Right lobe of liver (tissue), 6 donors: ENCODE measurements at regions of chr20 and their contacts with region 1.

Region 1: GRCh38 chr20:31617432-31618104 is 12.5 kb downstream of the ID1 start:
- DNase-seq: no peak
- ATAC-seq: no peak
- H3K4me3 ChIP-seq: no peak overlapping the region
- H3K27ac ChIP-seq: no peak overlapping the region
- H3K4me1 ChIP-seq: peaks cover 0 to 3% (median 1%) of the 10 kb centered on the region in 4 donors
- H3K27me3 ChIP-seq: no peaks in the 10 kb centered on the region
- CTCF ChIP-seq: no peak
- POLR2A ChIP-seq: no peak

Region 2: DNA sequence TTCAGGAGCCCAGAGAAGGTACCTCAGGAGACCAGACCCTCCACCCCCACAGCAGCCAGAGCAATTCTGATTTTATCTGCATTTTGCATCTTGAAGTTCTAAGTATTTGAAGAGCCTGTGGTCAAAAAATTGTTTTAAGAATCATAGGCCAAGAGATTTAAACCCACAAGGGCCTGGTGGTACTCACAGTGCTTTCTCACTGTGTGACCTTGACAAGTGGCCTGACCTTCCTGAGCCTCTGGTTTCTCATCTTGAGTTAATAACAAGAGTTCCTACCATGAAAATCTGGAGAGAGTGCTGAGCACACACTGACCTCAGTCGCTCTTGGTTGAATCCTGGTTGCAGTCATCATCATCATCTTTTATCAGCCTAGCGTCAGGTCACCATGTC is 57.9 kb before region 1 on chr20:
- intact Hi-C with region 1: loop called in 1 of 2 experiments (anchors 5 kb)
- DNase-seq: no peak
- ATAC-seq: no peak
- H3K4me3 ChIP-seq: no peak overlapping the region
- H3K27ac ChIP-seq: no peak overlapping the region
- H3K4me1 ChIP-seq: peaks cover 0 to 10% (median 0%) of the 10 kb centered on the region in 4 donors
- H3K27me3 ChIP-seq: no peaks in the 10 kb centered on the region
- CTCF ChIP-seq: no peak
- POLR2A ChIP-seq: no peak

Region 3: DNA sequence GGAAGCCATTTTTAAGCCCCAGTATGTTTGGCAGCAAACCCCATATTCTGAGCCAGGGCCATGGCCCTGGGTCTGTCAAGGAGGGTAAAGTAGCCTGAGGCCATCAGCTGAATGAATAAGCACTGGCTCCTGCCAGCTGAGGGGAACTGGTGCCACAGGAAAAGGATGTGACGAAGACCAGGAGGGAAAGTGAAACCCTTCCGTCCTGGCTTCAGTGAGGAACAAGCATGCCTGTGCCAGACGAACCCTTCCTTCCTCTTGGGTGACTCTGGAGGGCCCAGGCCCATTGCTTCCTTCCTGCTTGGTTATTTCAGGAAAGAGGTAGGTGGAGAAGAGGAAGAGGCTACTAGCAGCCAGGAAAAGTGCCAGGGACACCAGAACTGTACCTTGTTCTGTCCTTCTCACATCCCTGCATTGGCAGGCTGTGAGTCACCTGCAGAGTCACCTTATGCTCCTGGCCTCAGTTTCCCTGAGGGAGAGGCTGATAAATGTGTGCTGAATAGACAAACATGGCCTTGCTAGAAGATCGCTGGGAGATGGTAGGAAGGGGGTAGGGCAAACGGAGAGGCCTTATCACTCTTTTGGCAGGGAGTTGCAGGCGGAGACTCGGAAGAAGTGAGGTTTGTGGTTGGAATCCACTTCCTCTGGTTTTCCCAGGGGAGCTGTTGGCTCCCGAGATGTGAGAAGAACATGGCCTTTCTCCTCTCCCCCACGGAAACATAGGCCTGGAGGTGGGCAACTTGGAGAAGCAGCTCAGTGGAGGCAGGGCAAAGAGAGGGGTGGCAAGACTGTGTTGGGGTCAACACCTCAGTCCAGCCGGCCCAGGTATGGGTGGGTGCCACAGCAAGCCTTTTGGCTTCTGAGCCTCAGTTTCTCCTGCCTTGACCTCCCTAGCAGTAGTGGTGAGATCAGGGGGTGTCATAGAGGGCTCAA is 57.6 kb after region 1 on chr20:
- intact Hi-C with region 1: no loop called
- DNase-seq: peak; percentile 66 to 73 (median 71)
- ATAC-seq: peak; percentile 60 to 74 (median 66)
- H3K4me3 ChIP-seq: no peak overlapping the region
- H3K27ac ChIP-seq: peak overlapping the region; percentile 16 to 79 (median 66)
- H3K4me1 ChIP-seq: peaks cover 0 to 64% (median 17%) of the 10 kb centered on the region in 4 donors
- H3K27me3 ChIP-seq: no peaks in the 10 kb centered on the region
- CTCF ChIP-seq: no peak
- POLR2A ChIP-seq: no peak